ENCODE measurements at regions of chr7 and their contacts with region 1.

Region 1: GRCh38 chr7:116929914-116930913 is 23.1 kb upstream of the ST7 start:
- DNase-seq: peak; percentile 87
- ATAC-seq: peak; percentile 90

Region 2: DNA sequence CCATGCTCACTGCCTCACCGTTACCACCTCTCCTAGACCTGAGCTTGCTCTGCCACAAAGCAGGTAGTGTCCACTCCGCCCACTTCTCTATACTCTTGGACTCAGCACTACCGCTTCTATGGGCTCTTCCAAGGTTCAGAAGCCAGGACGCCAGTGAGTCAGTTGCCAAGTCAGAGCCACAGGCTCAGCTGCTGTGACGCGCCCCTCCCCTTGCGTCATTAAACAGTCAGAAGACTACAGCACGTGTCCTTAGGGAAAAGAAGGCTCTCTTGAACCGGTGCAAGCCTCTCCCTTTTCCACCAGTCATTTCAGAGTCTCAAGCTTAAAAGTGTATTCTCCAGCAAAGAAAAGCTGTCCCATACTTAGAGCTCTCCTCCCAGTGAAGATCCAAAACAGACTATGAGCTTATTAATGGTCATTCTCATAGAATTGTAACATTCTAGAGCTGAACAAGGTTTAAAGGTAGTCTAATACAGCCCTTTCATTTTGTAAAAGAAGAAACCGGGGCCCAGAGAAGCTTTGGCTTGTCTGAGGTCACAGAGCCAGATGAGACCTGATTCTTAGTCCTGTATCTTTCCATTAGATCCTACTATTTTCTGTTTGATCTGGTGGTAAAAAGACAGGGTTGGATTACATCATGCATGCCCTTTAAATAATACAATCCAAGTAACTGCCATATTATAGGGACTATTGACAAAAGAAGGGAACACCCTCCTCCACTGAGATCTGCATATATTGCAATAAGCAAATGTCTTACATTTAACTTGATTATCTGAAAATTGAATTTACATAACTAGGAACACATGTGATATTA is 299.1 kb before region 1 on chr7:
- intact Hi-C with region 1: no loop called
- DNase-seq: peak; percentile 61
- ATAC-seq: peak; percentile 62

Region 3: DNA sequence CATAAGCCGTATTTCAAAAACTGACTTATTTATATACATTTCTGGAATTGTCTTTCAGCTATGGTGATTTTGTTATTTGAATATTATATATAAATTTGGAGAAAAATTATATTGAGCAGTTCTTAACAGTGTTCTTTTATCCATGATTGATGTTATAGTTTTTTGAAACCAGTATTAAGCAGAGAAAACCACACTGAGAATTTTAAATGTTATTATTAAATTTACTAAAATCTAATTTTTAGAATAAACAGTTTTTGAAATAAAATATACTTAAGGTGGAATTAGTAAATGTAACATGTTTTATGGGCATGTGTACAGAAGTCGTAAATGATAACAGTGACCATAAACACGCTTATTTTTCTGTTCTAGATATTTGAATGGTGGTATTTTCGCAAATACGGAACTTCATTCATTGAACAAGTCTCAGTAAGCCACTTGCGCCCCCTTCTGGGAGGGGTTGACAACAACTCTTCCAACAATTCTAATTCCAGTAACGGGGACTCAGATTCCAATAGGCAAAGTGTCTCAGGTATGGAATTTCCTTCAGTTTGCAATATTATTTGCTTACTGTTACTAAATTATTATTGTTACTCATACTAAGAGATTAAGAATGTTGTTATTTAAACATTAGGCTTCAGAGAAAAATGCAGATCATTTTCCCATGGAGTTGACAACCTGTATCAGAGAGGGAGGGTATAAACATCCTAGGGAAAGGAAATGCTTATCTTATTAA is 189.1 kb after region 1 on chr7:
- intact Hi-C with region 1: loop called (anchors 5 kb)
- DNase-seq: peak; percentile 80
- ATAC-seq: peak; percentile 55

Measured in left ventricle myocardium superior (tissue), 1 donor.